ENCODE measurements at regions of chr2 and their contacts with region 1.

Region 1: DNA sequence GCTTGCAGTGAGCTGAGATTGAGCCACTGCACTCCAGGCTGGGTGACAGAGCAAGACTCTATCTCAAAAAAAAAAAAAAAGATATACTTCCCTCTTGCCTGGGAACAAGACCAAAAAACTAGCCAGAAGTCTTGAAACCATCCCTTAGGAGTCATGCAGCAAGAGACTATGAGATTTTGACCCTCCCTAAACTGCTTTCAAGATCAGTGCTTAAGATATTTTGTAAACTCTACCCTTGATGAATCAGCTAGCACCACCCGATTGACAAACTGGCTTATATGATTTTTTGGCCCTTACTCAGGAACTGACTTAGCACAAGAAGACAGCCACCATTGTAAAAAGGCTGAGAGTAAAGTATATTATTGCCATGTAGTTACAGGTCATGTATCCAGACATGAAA is 3.8 kb downstream of the SULT1C3 start:
- DNase-seq: no peak
- H3K4me3 ChIP-seq: no peak overlapping the region
- H3K27ac ChIP-seq: no peak overlapping the region
- H3K4me1 ChIP-seq: no peaks in the 10 kb centered on the region
- CTCF ChIP-seq: no peak

Region 2: GRCh38 chr2:108058576-108059137 is 184.9 kb before region 1 on chr2:
- CTCF ChIA-PET with region 1: no interaction called
- POLR2A ChIA-PET with region 1: interaction called, 4 read pairs
- intact Hi-C with region 1: loop called (anchors 10 kb)
- DNase-seq: no peak
- H3K4me3 ChIP-seq: no peak overlapping the region
- H3K27ac ChIP-seq: no peak overlapping the region
- H3K4me1 ChIP-seq: no peaks in the 10 kb centered on the region
- CTCF ChIP-seq: no peak